Dorsolateral prefrontal cortex (tissue), 120 donors: ENCODE measurements at regions of chr20 and their contacts with region 1.

Region 1: GRCh38 chr20:59207742-59208357 is 44.2 kb downstream of the ZNF831 start:
- DNase-seq: peak in 8 of 10 donors; percentile 52 to 75 (median 68)
- H3K4me3 ChIP-seq: no peak overlapping the region
- H3K27ac ChIP-seq: no peak overlapping the region
- H3K27me3 ChIP-seq: no peaks in the 10 kb centered on the region
- CTCF ChIP-seq: peak in 55 of 56 donors; percentile 41 to 84 (median 68)

Region 2: DNA sequence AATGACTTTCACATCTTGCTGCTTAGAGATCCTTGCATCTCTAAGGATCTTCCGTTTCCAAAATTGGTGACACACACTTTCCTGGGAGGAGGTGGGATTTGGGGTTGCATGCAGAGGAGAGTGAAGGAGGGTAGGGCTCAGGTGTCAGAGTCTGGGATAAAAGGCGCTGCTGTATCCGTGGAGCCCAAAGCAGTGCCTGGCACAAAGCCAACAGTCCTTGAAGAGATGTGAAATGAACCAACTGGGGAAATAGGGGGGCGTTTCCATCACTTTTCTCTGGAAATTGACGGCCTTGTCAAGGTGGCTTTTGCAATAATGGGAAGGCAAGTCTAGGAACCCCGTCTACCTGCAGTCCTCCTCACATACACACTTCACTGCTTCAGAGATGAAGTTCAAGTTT is 286.3 kb before region 1 on chr20:
- intact Hi-C with region 1: no loop called
- DNase-seq: no peak
- H3K4me3 ChIP-seq: no peak overlapping the region
- H3K27ac ChIP-seq: no peak overlapping the region
- H3K27me3 ChIP-seq: no peaks in the 10 kb centered on the region
- CTCF ChIP-seq: no peak

Region 3: DNA sequence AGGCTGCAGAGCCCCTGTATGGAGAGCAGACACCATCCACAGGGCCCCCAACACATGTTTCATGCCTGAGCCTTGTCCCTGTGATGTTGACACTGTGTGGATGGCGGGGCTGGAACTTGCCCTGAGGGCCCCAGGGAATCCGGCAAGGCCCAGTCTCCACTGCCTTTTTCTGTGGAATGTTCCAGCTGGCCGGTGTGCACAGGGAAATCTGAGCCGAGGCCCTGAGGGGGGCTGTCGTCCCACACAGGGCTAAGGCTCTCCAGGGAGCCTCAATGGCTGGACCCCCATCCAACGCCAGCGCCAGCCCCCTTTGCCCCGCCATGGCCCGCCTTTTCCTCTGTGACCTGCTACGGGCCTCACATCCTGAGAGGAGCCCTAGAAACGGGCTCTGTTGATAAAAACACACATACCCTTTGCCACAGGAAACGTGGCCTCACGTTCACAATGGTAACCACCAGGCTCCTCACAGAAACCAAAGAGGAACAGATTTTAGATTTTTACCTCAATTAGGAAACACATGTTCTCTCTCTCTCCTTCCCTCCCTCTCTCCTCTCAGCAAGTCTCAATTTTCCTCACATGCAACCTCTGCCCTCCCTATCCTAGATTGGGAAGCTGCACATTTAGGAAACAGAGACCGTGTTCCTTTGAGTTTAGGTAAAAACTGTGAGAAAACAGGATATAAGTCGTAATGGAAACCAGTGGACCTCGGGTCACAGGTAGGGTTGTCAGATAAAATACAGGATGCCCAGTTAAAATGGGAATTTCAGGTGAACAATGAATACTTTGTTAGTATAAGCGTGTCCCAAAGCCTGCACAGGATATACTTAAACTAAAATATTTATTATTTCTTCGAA is 58.0 kb before region 1 on chr20:
- intact Hi-C with region 1: loop called in 1 of 2 experiments (anchors 5 kb)
- DNase-seq: no peak
- H3K4me3 ChIP-seq: no peak overlapping the region
- H3K27ac ChIP-seq: peak overlapping the region in 2 of 59 donors; percentile 4 to 8
- H3K27me3 ChIP-seq: no peaks in the 10 kb centered on the region
- CTCF ChIP-seq: no peak

Region 4: DNA sequence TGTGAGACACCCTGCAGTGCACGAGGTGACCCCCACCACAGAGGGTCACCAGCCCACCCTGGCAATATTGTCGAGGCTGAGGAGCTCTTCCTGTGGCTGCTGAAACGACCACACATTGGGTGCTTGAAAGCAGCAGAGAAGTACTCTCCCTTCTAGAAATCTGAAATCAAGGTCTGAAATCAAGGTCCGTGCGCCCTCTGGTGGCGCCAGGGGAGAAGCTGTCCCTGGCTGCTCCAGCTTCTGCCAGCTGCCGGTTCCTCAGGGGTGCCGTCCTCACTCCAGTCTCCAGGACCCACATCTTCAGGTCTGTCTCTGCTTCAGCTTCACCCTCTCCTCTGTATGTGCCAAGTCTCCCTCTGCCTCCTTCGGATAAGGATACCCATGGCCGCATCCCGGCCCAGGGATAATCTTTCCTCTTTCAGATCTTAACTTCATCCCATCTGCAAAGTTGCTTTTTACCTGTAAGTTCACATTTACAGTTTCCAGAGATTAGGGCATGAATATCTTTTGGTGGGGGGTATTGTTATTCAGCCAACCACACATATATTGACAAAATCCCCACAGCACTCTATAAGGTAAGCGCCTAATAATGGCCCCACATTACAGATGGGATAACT is 288.2 kb after region 1 on chr20:
- intact Hi-C with region 1: loop called in 1 of 2 experiments (anchors 10 kb)
- DNase-seq: peak; percentile 62 to 79 (median 74)
- H3K4me3 ChIP-seq: no peak overlapping the region
- H3K27ac ChIP-seq: no peak overlapping the region
- H3K27me3 ChIP-seq: peaks cover 0 to 37% (median 8%) of the 10 kb centered on the region in 45 donors
- CTCF ChIP-seq: peak in 55 of 56 donors; percentile 74 to 94 (median 86)